PC-9 (cell line): ENCODE measurements at regions of chr7 and their contacts with region 1.

Region 1: GRCh38 chr7:123494193-123494796 is 40.1 kb downstream of the IQUB start:
- DNase-seq: peak in 1 of 2 experiments; percentile 10
- H3K4me3 ChIP-seq: no peak overlapping the region
- H3K27ac ChIP-seq: no peak overlapping the region
- H3K4me1 ChIP-seq: no peaks in the 10 kb centered on the region
- H3K27me3 ChIP-seq: no peaks in the 10 kb centered on the region
- CTCF ChIP-seq: peak; percentile 87

Region 2: GRCh38 chr7:123557398-123558288 is 63.3 kb after region 1 on chr7 and contains the start of gene NDUFA5:
- CTCF ChIA-PET with region 1: interaction called, 10 read pairs
- POLR2A ChIA-PET with region 1: no interaction called
- intact Hi-C with region 1: no loop called
- DNase-seq: peak; percentile 91 to 98
- H3K4me3 ChIP-seq: peak within 1 kb of the TSS; percentile 82
- H3K27ac ChIP-seq: peak within 1 kb of the TSS; percentile 31; the same call in 1 of the 2 replicates
- H3K4me1 ChIP-seq: peaks cover 10% of the 10 kb centered on the region; the same call in 1 of the 2 replicates
- H3K27me3 ChIP-seq: no peaks in the 10 kb centered on the region
- CTCF ChIP-seq: no peak
- total RNA-seq, gene NDUFA5: 57.0 and 75.9 TPM in 2 replicates

Region 3: GRCh38 chr7:123712619-123713018 is 218.3 kb after region 1 on chr7:
- CTCF ChIA-PET with region 1: no interaction called
- POLR2A ChIA-PET with region 1: no interaction called
- intact Hi-C with region 1: loop called (anchors 10 kb)
- DNase-seq: peak in 1 of 2 experiments; percentile 52
- H3K4me3 ChIP-seq: no peak overlapping the region
- H3K27ac ChIP-seq: peak overlapping the region; percentile 29; the same call in 1 of the 2 replicates
- H3K4me1 ChIP-seq: peaks cover 26% of the 10 kb centered on the region
- H3K27me3 ChIP-seq: no peaks in the 10 kb centered on the region
- CTCF ChIP-seq: no peak

Region 4: GRCh38 chr7:123871998-123872867 is 377.9 kb after region 1 on chr7:
- CTCF ChIA-PET with region 1: interaction called, 3 read pairs
- POLR2A ChIA-PET with region 1: no interaction called
- intact Hi-C with region 1: loop called (anchors 1 kb)
- DNase-seq: peak; percentile 38 to 40
- H3K4me3 ChIP-seq: no peak overlapping the region
- H3K27ac ChIP-seq: no peak overlapping the region
- H3K4me1 ChIP-seq: no peaks in the 10 kb centered on the region
- H3K27me3 ChIP-seq: no peaks in the 10 kb centered on the region
- CTCF ChIP-seq: peak; percentile 59